ENCODE measurements at regions of chr1 and their contacts with region 1.

Region 1: GRCh38 chr1:114716304-114717170 is at the start of gene NRAS:
- DNase-seq: peak; percentile 91
- H3K4me3 ChIP-seq: peak within 1 kb of the TSS; percentile 94 to 100 (median 100)
- H3K27ac ChIP-seq: peak within 1 kb of the TSS; percentile 100
- H3K4me1 ChIP-seq: peaks cover 24% of the 10 kb centered on the region
- H3K27me3 ChIP-seq: no peaks in the 10 kb centered on the region
- CTCF ChIP-seq: no peak
- POLR2A ChIP-seq: peak; percentile 85
- total RNA-seq, gene NRAS: 76.5 and 78.7 TPM in 2 replicates

Region 2: DNA sequence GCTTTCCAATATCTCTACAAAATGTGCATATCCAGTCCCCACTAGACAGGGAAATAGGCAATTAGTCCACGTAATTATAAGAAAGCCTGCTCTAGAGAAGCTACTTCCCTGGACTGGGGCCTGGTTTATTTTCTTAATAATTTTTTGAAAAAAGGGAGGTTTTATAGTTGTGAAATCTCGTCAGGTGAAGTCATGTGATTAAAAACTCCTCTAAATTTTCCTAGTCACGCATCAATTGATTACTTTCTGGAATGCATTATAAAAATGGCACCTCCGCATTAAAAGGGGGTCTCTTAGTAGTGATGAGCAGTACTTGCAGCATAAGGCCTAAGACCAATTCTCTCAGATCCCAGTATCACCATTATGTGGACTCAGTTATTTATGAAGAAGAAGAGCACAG is 313.7 kb before region 1 on chr1:
- CTCF ChIA-PET with region 1: no interaction called
- POLR2A ChIA-PET with region 1: no interaction called
- dilution Hi-C with region 1: no loop called
- intact Hi-C with region 1: loop called (anchors 10 kb)
- DNase-seq: no peak
- H3K4me3 ChIP-seq: no peak overlapping the region
- H3K27ac ChIP-seq: no peak overlapping the region
- H3K4me1 ChIP-seq: no peaks in the 10 kb centered on the region
- H3K27me3 ChIP-seq: no peaks in the 10 kb centered on the region
- CTCF ChIP-seq: no peak
- POLR2A ChIP-seq: no peak

Region 3: GRCh38 chr1:114670083-114671010 is 46.2 kb before region 1 on chr1:
- CTCF ChIA-PET with region 1: no interaction called
- POLR2A ChIA-PET with region 1: no interaction called
- dilution Hi-C with region 1: no loop called
- intact Hi-C with region 1: loop called (anchors 2 kb)
- DNase-seq: peak; percentile 91
- H3K4me3 ChIP-seq: peak overlapping the region in 2 of 3 experiments; percentile 49 to 62
- H3K27ac ChIP-seq: no peak overlapping the region
- H3K4me1 ChIP-seq: peaks cover 11% of the 10 kb centered on the region
- H3K27me3 ChIP-seq: peaks cover 10 to 17% of the 10 kb centered on the region in 2 experiments
- CTCF ChIP-seq: no peak
- POLR2A ChIP-seq: no peak

Region 4: GRCh38 chr1:114745291-114745690 is 28.8 kb after region 1 on chr1:
- CTCF ChIA-PET with region 1: interaction called, 7 read pairs
- POLR2A ChIA-PET with region 1: no interaction called
- dilution Hi-C with region 1: no loop called
- intact Hi-C with region 1: loop called (anchors 2 kb)
- DNase-seq: peak; percentile 24
- H3K4me3 ChIP-seq: no peak overlapping the region
- H3K27ac ChIP-seq: no peak overlapping the region
- H3K4me1 ChIP-seq: peaks cover 3% of the 10 kb centered on the region
- H3K27me3 ChIP-seq: no peaks in the 10 kb centered on the region
- CTCF ChIP-seq: no peak
- POLR2A ChIP-seq: no peak

Region 5: GRCh38 chr1:114780344-114781226 is 64.0 kb after region 1 on chr1 and contains the start of gene SIKE1:
- CTCF ChIA-PET with region 1: no interaction called
- POLR2A ChIA-PET with region 1: no interaction called
- dilution Hi-C with region 1: no loop called
- intact Hi-C with region 1: loop called (anchors 2 kb)
- DNase-seq: peak; percentile 92
- H3K4me3 ChIP-seq: peak within 1 kb of the TSS; percentile 64 to 87 (median 84)
- H3K27ac ChIP-seq: peak within 1 kb of the TSS; percentile 62
- H3K4me1 ChIP-seq: peaks cover 9% of the 10 kb centered on the region
- H3K27me3 ChIP-seq: peaks cover 5% of the 10 kb centered on the region in 2 experiments
- CTCF ChIP-seq: no peak
- POLR2A ChIP-seq: peak; percentile 96
- total RNA-seq, gene SIKE1: 38.6 and 46.6 TPM in 2 replicates

Region 6: GRCh38 chr1:115609021-115609420 is 892.5 kb after region 1 on chr1:
- CTCF ChIA-PET with region 1: no interaction called
- POLR2A ChIA-PET with region 1: no interaction called
- dilution Hi-C with region 1: no loop called
- intact Hi-C with region 1: no loop called
- DNase-seq: no peak
- H3K4me3 ChIP-seq: no peak overlapping the region
- H3K27ac ChIP-seq: no peak overlapping the region
- H3K4me1 ChIP-seq: no peaks in the 10 kb centered on the region
- H3K27me3 ChIP-seq: peaks cover 2 to 3% of the 10 kb centered on the region in 2 experiments
- CTCF ChIP-seq: no peak
- POLR2A ChIP-seq: no peak

Measured in endothelial cell of umbilical vein (primary cell).